Heart left ventricle (tissue), 16 donors: ENCODE measurements at regions of chr3 and their contacts with region 1.

Region 1: DNA sequence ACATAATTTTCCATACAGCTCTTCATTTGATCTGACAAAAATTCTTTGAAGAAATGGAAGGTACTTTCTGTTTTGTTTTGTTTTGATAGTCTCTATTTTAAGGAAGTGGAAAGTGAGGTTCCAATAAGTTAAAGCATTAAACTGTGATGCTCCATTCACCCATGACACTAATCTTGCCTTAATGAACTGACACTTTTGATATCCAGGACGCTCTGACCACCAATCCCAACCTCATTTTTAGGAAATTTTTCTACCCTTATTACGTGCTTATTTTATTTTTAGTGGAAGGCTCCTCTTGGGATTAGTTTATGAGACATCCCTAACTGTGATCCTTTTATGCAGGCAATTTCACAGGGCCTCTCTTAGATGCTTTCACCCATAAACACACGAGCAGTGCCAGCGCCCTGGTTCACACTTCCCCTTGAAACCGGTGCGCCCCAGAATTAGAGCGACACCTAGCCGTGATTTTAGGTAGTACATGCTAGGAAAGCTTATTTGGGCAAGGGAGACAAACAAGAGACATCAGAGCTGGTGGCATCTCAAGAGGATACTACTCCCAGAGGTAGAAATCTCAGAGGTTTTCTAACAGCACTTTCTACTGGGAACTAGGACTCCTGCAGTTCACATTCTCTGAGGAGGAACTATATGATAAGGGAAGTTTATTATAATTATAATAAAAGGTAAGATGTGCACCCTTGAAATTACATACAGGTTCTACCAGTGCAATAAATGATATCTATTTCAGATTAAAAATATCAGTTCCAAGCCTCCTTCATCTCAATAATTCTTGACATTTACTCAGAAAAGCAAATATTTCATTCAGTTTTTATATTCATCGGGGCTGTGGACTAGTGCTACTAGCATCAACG is 173.9 kb downstream of the SLC9A9 start:
- DNase-seq: peak; percentile 55 to 69 (median 66)
- ATAC-seq: peak; percentile 55 to 85 (median 77)
- H3K4me3 ChIP-seq: no peak overlapping the region
- H3K27ac ChIP-seq: no peak overlapping the region
- H3K4me1 ChIP-seq: peaks cover 0 to 9% (median 0%) of the 10 kb centered on the region in 12 donors
- H3K27me3 ChIP-seq: no peaks in the 10 kb centered on the region
- CTCF ChIP-seq: peak; percentile 79 to 96 (median 86)
- POLR2A ChIP-seq: no peak

Region 2: DNA sequence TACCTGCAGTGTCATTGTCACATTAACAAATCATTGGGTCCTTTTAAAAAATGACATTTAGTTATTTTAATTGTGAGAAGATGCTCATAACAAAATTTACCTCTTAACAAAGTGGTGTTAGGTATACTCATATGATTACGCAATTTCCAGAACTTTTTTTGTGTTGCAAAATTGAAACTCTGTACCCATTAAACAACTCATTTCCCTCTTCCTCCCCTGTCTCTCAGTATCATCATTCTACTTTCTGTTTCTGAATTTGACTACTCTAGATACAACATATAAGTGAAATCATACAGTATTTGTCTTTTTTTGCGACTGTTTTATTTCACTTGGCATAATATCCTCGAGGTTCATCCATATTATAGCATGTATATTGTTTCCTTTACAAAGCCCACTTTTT is 613.4 kb before region 1 on chr3:
- intact Hi-C with region 1: loop called in 1 of 10 experiments (anchors 10 kb)
- DNase-seq: no peak
- ATAC-seq: no peak
- H3K4me3 ChIP-seq: no peak overlapping the region
- H3K27ac ChIP-seq: peak overlapping the region in 1 of 12 donors; percentile 38
- H3K4me1 ChIP-seq: no peaks in the 10 kb centered on the region
- H3K27me3 ChIP-seq: no peaks in the 10 kb centered on the region
- CTCF ChIP-seq: no peak
- POLR2A ChIP-seq: no peak

Region 3: GRCh38 chr3:143119009-143119914 is 555.1 kb before region 1 on chr3 and contains the start of gene CHST2:
- intact Hi-C with region 1: loop called in 4 of 10 experiments (anchors 10 kb)
- DNase-seq: peak; percentile 73 to 87 (median 75)
- ATAC-seq: peak; percentile 66 to 98 (median 94)
- H3K4me3 ChIP-seq: peak within 1 kb of the TSS; percentile 51 to 91 (median 72)
- H3K27ac ChIP-seq: peak within 1 kb of the TSS in 11 of 12 donors; percentile 43 to 82 (median 60)
- H3K4me1 ChIP-seq: peaks cover 0 to 37% (median 2%) of the 10 kb centered on the region in 12 donors
- H3K27me3 ChIP-seq: peaks cover 0 to 33% (median 9%) of the 10 kb centered on the region in 9 donors
- CTCF ChIP-seq: no peak
- POLR2A ChIP-seq: peak in 1 of 2 donors; percentile 51
- total RNA-seq, gene CHST2: 1.3 to 8.7 (median 2.4) TPM

Region 4: DNA sequence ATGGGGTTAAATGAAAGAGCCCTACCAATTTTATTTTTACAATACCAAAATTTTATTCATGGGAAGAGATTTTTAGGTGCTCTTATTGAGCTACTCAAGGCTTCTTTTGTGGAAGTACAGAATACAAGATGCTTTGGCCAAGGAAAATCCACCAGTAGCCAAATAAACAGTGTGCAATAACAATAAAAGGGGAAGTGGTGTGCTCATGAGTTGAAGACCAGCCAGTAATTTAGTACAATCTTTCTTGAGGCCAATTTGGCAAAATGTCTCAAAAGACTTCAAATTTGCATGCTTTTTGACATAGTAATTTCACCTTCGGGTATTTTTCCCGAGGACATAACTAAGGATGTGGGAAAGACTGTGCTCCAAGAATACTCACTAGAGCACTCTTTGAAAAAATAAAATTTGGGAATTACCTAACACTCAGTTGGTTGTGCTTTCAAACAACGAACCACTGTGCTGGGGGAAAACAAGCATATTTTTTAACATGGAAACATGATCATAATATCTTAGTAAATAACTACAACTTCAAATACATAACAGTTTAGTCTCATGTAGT is 591.3 kb after region 1 on chr3:
- intact Hi-C with region 1: no loop called
- DNase-seq: peak in 2 of 5 donors; percentile 20 to 25
- ATAC-seq: peak; percentile 57 to 91 (median 72)
- H3K4me3 ChIP-seq: peak overlapping the region in 2 of 12 donors; percentile 2 to 4
- H3K27ac ChIP-seq: peak overlapping the region in 4 of 12 donors; percentile 11 to 51 (median 34)
- H3K4me1 ChIP-seq: peaks cover 0 to 18% (median 3%) of the 10 kb centered on the region in 12 donors
- H3K27me3 ChIP-seq: no peaks in the 10 kb centered on the region
- CTCF ChIP-seq: no peak
- POLR2A ChIP-seq: no peak